Endothelial cell of umbilical vein (primary cell): ENCODE measurements at regions of chr13 and their contacts with region 1.

Region 1: DNA sequence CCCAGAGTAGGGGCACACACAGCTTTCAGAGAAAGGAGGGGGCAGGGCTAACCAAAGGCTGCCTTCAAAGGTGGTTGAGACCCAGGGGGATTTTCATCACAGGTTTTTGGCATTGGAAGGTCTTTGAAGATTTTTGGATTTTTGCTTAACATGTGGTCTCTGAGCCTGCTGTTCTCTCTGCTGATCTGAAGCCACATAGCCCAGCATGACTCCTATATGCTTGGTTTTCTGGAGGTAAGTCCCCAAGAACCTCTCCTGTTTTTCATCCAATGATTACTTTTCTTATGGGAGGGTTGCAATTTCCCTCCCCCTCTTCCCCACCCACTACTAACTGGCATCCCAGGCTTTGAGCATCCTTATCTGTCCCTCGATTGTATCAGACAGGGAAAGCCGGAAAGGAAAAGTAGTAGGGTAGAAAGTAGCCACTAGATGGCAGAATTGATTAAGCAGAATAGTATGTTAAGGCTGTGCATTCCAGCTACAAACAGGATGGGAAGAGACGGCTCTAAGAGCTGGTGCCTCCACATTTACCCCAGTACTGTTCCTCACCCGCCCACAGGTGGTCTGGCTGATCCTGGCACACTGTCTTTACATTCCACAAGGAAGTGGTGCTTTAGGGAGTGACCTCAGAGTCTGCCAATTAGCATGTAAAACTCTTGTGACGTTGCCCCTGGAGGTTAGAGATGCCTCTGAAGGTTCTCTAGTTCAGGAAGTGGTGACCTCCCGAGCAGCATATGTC is 218.9 kb upstream of the EDNRB start:
- DNase-seq: peak; percentile 71
- H3K4me3 ChIP-seq: no peak overlapping the region
- H3K27ac ChIP-seq: no peak overlapping the region
- H3K4me1 ChIP-seq: peaks cover 4% of the 10 kb centered on the region
- H3K27me3 ChIP-seq: peaks cover 0 to 2% of the 10 kb centered on the region in 2 experiments
- CTCF ChIP-seq: peak; percentile 55 to 61
- POLR2A ChIP-seq: no peak

Region 2: DNA sequence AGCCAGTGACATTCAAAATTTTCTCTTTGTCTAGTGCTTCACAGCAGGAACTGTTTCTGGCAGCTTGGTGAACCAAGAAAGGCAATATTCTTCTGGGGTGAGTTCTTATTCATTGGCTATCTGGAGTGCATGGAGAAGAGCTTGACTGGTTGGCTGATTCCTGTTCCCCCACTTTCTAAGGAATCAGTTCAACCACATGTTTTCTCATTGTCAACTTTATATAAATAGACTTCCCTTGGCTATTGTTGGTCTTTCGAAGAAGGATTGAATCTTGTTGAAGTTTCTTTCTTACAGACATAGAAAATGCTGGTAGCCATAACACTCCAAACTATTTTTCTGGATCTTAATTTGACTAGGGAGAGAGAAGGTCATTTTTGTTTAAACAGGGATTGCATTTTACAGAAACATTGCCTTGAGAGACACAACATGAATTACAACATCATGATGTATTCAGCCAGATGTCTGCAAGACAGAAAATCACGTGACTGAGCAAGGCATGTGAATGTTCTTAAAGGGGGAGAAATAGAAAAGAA is 304.2 kb before region 1 on chr13:
- CTCF ChIA-PET with region 1: no interaction called
- POLR2A ChIA-PET with region 1: no interaction called
- dilution Hi-C with region 1: no loop called
- intact Hi-C with region 1: no loop called
- DNase-seq: no peak
- H3K4me3 ChIP-seq: no peak overlapping the region
- H3K27ac ChIP-seq: no peak overlapping the region
- H3K4me1 ChIP-seq: no peaks in the 10 kb centered on the region
- H3K27me3 ChIP-seq: no peaks in the 10 kb centered on the region
- CTCF ChIP-seq: no peak
- POLR2A ChIP-seq: no peak

Region 3: DNA sequence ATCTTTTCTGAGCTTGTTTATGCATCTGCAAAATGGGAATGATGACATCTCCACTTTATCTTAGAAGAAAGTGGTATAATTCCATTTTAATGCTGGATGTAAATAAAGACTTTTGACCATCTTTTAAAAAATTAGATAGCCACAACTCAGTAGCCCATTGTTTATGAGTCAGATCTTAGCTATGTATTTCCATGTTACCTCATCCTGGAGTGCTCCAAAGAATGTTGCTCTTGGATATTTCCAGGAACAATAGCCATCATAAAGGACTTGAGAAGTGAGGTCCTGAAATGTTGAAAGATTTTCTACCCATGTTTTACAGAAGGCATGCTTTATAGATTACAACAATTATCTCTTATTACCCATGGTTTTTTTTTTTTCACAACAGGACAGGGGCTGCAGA is 10.3 kb after region 1 on chr13:
- CTCF ChIA-PET with region 1: interaction called, 22 read pairs
- POLR2A ChIA-PET with region 1: no interaction called
- dilution Hi-C with region 1: no loop called
- intact Hi-C with region 1: no loop called
- DNase-seq: peak; percentile 75
- H3K4me3 ChIP-seq: no peak overlapping the region
- H3K27ac ChIP-seq: peak overlapping the region; percentile 82
- H3K4me1 ChIP-seq: peaks cover 21% of the 10 kb centered on the region
- H3K27me3 ChIP-seq: no peaks in the 10 kb centered on the region
- CTCF ChIP-seq: no peak
- POLR2A ChIP-seq: no peak

Region 4: DNA sequence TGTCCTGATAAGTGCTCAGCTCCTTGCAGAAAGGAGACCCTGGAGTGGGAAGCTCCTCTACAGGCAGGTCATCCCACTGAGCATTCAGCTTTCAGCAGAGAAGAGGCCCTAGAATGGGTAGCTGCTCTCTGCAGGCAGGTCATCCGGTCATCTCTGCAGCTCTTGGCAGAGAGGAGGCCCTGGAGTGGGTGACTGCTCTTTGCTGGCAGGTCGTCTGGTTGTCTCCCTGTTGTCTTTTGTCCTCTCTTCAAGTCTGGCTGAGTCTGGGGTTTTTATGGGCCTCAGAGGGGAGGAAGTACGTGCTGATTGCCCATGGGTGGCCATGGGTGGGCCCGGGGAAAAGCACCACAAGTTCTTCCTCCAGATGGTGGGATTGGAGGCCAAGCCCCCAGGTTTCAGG is 31.4 kb after region 1 on chr13:
- CTCF ChIA-PET with region 1: no interaction called
- POLR2A ChIA-PET with region 1: no interaction called
- dilution Hi-C with region 1: no loop called
- intact Hi-C with region 1: no loop called
- DNase-seq: no peak
- H3K4me3 ChIP-seq: no peak overlapping the region
- H3K27ac ChIP-seq: no peak overlapping the region
- H3K4me1 ChIP-seq: no peaks in the 10 kb centered on the region
- H3K27me3 ChIP-seq: no peaks in the 10 kb centered on the region
- CTCF ChIP-seq: no peak
- POLR2A ChIP-seq: no peak

Region 5: DNA sequence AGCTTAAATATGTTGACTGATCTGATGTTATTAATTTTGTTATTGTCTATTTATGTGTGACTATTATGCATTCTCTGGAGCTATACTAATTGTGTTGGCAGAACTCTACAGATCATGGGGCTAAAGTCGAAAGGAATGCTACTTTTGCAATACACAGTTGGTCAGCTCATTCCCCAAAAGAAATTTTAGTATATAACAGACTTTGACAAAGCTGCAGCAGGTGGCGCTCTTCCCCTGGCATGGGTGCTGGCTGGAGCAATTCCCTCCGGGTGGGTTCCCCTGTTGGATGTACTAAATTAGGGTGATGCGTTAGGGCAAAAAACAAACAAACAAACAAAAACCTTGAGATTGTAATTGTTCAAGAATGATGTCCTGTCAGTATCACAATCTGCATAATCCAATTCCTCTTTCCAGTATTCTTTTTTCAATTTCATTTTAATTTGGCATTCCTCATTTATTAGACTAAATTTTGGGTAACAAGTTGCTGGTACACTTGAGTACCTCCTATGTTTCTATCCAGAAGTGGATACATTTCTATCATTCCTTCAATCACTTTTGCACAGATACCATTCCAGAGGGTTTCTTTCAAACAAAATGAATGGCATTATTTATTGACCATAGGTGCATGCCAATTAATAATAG is 103.8 kb after region 1 on chr13:
- CTCF ChIA-PET with region 1: interaction called, 99 read pairs
- POLR2A ChIA-PET with region 1: no interaction called
- dilution Hi-C with region 1: no loop called
- intact Hi-C with region 1: loop called (anchors 1 kb)
- DNase-seq: peak; percentile 53
- H3K4me3 ChIP-seq: no peak overlapping the region
- H3K27ac ChIP-seq: no peak overlapping the region
- H3K4me1 ChIP-seq: no peaks in the 10 kb centered on the region
- H3K27me3 ChIP-seq: peaks cover 4% of the 10 kb centered on the region in 2 experiments
- CTCF ChIP-seq: peak; percentile 66 to 70
- POLR2A ChIP-seq: no peak

Region 6: DNA sequence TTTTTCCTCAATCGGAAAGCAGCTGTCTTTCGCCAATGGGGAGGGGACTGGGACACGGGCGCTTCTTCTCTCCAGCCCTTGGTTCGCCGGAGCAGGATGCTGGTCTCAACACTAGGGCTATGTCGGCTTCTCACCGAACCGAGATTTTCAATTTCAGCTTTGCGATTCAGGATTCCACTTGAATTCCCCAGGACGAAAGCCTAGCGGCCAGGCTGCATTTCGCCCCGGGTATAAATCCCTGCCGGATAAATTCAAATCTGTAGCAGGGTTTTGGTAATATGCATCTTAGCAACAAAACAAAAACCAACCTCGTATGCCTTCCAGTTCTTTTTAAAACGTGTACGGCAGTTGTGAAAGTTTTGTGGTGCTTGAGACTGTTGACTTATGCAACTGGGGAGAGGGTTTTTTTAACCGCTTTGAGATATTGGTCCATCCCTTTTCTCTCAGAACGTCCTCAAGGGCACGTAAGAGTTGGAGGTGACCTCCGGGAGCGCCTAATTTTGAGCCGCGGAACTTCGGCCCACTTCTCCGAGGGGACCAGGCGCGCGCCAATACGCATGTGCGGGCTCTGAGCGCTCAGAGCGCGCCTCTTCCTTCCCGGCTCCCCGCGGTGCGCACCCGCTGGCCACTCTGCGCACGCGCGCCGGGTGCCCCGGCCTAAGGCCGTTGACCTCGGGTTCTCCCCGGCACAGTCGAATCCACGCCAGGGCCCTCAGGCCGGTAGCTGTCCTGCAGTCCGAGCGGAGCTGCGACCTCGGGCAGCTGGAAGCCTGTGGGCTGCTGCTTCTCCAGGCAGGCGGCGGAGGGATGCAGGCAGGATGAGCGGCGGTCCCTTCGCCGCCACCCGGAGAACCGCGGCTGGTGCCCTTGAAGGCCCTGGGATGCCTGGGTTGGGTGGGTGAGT is 458.2 kb after region 1 on chr13:
- CTCF ChIA-PET with region 1: interaction called, 3 read pairs
- POLR2A ChIA-PET with region 1: no interaction called
- dilution Hi-C with region 1: no loop called
- intact Hi-C with region 1: loop called (anchors 5 kb)
- DNase-seq: no peak
- H3K4me3 ChIP-seq: peak overlapping the region in 2 of 3 experiments; percentile 25 to 30
- H3K27ac ChIP-seq: no peak overlapping the region
- H3K4me1 ChIP-seq: peaks cover 6% of the 10 kb centered on the region
- H3K27me3 ChIP-seq: peaks cover 79 to 100% of the 10 kb centered on the region in 2 experiments
- CTCF ChIP-seq: no peak
- POLR2A ChIP-seq: no peak

Region 7: DNA sequence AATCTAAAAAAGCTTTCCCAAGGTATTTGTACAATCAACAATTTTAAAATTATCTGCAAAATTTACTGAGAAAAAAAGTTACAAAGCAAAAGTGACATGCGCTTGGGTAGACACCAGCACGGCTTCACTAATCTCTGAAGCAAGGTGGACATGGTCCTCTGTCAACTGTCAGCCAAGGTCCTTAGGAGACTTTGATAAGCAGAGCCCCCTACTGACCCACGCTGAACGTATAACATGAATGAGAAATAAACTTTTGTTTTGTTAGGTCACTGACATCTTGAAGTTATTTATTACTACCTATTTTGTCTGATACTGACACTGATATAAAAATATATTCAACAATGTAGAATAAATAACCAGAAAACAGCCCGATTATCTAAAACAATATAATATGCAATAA is 622.1 kb after region 1 on chr13:
- CTCF ChIA-PET with region 1: interaction called, 13 read pairs
- POLR2A ChIA-PET with region 1: no interaction called
- dilution Hi-C with region 1: no loop called
- intact Hi-C with region 1: loop called (anchors 5 kb)
- DNase-seq: no peak
- H3K4me3 ChIP-seq: no peak overlapping the region
- H3K27ac ChIP-seq: no peak overlapping the region
- H3K4me1 ChIP-seq: peaks cover 8% of the 10 kb centered on the region
- H3K27me3 ChIP-seq: no peaks in the 10 kb centered on the region
- CTCF ChIP-seq: no peak
- POLR2A ChIP-seq: no peak

Region 8: GRCh38 chr13:78978381-78978998 is 840.9 kb after region 1 on chr13:
- CTCF ChIA-PET with region 1: interaction called, 150 read pairs
- POLR2A ChIA-PET with region 1: no interaction called
- dilution Hi-C with region 1: no loop called
- intact Hi-C with region 1: loop called (anchors 1 kb)
- DNase-seq: peak; percentile 70
- H3K4me3 ChIP-seq: no peak overlapping the region
- H3K27ac ChIP-seq: no peak overlapping the region
- H3K4me1 ChIP-seq: no peaks in the 10 kb centered on the region
- H3K27me3 ChIP-seq: no peaks in the 10 kb centered on the region
- CTCF ChIP-seq: peak; percentile 43 to 59
- POLR2A ChIP-seq: no peak

Region 9: GRCh38 chr13:79393564-79394249 is 1256.1 kb after region 1 on chr13:
- CTCF ChIA-PET with region 1: interaction called, 5 read pairs
- POLR2A ChIA-PET with region 1: no interaction called
- dilution Hi-C with region 1: no loop called
- intact Hi-C with region 1: loop called (anchors 5 kb)
- DNase-seq: peak; percentile 83
- H3K4me3 ChIP-seq: no peak overlapping the region
- H3K27ac ChIP-seq: peak overlapping the region; percentile 8
- H3K4me1 ChIP-seq: peaks cover 18% of the 10 kb centered on the region
- H3K27me3 ChIP-seq: no peaks in the 10 kb centered on the region
- CTCF ChIP-seq: no peak
- POLR2A ChIP-seq: no peak